ENCODE measurements at regions of chr10 and their contacts with region 1.

Region 1: DNA sequence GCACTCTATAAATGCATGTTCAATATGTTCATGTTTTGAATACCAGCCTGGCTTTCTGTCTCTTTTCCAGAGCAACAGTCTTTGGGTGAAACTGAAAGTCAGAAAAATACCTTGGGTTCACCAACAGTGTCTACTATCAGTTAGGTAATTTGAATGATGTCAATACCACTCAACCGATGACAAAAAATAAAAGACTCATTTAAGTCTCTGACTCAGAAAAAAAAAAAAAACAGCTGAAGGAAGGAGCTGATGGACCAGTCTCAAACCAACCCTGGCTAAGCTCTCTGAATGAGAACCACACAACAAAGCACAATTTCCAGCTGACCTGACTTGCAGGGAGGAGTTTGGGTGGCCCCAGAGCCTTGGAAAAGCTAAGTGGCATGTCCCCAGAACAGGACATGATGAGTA is 42.5 kb downstream of the ABLIM1 start:
- DNase-seq: peak; percentile 67
- H3K4me3 ChIP-seq: no peak overlapping the region
- H3K27ac ChIP-seq: no peak overlapping the region
- H3K4me1 ChIP-seq: peaks cover 5% of the 10 kb centered on the region
- H3K27me3 ChIP-seq: no peaks in the 10 kb centered on the region
- CTCF ChIP-seq: no peak

Region 2: DNA sequence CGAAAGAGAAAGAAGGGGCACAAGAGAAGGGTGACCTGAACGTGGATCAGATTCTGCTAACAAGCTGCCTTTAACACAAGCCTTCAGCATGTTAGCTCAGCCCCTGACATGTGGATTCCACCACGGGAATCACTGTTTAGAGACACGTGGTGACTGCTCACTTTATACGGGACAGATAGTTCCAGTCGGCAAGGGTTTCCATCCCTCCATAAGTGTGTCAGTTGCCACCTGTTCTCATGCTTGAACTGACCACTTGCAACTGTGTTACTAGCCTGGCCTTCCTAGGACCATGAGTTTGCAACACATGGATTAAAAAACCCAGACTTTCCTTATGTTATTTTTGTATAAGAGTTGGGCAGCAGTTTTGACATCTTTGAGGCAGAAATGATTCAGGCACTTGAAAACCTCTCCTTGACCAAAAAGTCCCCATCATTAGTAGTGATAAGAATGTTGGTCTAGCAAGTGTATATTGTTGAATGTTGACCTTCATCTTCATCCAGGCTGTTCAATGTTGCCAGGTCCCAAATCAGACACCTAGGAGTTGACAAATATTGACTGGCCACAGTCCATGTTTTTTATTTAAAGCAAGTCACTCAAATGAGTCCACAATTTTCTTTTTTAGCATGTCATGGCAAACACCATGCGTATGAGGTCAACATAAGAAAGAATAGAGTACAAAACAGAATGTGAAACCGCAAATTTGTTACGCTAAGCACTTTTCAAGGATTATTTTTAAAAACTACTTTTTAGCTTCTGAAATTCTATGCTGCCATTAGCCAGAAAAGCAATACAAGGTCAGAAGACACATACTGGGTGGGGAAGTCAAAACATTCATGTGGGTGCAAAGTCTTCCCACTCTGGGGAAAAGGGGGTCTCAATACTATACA is 59.1 kb before region 1 on chr10:
- CTCF ChIA-PET with region 1: no interaction called
- dilution Hi-C with region 1: loop called (anchors 5 kb)
- in situ Hi-C with region 1: no loop called
- intact Hi-C with region 1: no loop called
- DNase-seq: no peak
- H3K4me3 ChIP-seq: no peak overlapping the region
- H3K27ac ChIP-seq: no peak overlapping the region
- H3K4me1 ChIP-seq: no peaks in the 10 kb centered on the region
- H3K27me3 ChIP-seq: no peaks in the 10 kb centered on the region
- CTCF ChIP-seq: no peak

Region 3: GRCh38 chr10:114638821-114639625 is 23.4 kb after region 1 on chr10:
- CTCF ChIA-PET with region 1: no interaction called
- dilution Hi-C with region 1: no loop called
- in situ Hi-C with region 1: no loop called
- intact Hi-C with region 1: loop called (anchors 1 kb)
- DNase-seq: peak; percentile 89
- H3K4me3 ChIP-seq: no peak overlapping the region
- H3K27ac ChIP-seq: no peak overlapping the region
- H3K4me1 ChIP-seq: peaks cover 35% of the 10 kb centered on the region
- H3K27me3 ChIP-seq: no peaks in the 10 kb centered on the region
- CTCF ChIP-seq: no peak

Region 4: DNA sequence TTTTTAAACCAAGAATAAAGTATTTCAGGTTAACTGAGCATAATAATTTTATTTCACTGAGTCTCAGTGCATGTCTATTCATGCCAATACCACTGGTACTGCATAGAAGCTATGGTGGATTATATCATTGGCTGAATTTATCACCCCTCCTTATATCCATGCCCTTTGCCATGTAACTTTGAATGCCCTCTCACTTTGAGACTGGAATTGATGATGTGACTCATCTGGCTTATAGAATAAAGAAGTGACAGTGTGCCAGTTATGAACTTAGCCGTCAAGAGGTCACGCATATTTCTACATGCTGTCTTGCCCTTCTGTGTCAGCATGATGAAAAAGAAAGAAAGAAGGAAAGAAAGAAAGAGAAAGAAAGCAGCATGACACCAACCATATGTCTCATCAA is 63.2 kb after region 1 on chr10:
- CTCF ChIA-PET with region 1: no interaction called
- dilution Hi-C with region 1: loop called (anchors 5 kb)
- in situ Hi-C with region 1: no loop called
- intact Hi-C with region 1: no loop called
- DNase-seq: no peak
- H3K4me3 ChIP-seq: no peak overlapping the region
- H3K27ac ChIP-seq: no peak overlapping the region
- H3K4me1 ChIP-seq: peaks cover 29% of the 10 kb centered on the region
- H3K27me3 ChIP-seq: no peaks in the 10 kb centered on the region
- CTCF ChIP-seq: no peak

Measured in mammary epithelial cell (primary cell).